Thyroid gland (tissue), 4 donors: ENCODE measurements at regions of chr7 and their contacts with region 1.

Region 1: GRCh38 chr7:148962823-148963582 is 65.3 kb downstream of the PDIA4 start:
- DNase-seq: peak; percentile 66 to 74
- H3K4me3 ChIP-seq: peak overlapping the region in 2 of 3 donors; percentile 26 to 31
- H3K27ac ChIP-seq: peak overlapping the region; percentile 16 to 60 (median 57)
- H3K4me1 ChIP-seq: peaks cover 0 to 4% of the 10 kb centered on the region in 2 donors
- H3K27me3 ChIP-seq: no peaks in the 10 kb centered on the region
- CTCF ChIP-seq: peak; percentile 25 to 97 (median 59)
- POLR2A ChIP-seq: no peak

Region 2: DNA sequence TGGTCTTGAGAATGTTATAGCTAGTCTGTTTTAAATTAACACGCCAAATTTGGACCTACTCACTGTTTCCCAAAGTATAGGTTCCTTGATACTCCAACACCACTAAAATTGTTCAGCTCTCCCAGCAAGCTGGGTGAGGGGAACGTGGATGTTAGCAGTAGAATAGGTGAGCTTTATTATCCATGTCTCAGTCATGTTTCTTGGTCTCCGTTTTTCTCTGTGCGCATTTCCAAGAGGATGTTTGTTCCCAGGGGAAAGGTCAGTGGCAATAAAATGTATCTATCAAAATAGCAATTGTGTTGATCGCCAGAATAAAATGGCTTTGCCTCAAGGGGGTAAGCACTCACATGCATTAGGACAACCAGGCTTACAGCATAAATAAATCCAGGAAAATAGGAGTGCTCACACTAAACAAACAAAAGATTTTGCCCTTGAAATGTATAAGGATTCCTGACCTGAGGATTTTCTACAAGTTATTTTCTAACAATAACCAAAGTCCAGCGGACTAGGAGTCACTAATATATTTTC is 559.5 kb before region 1 on chr7:
- intact Hi-C with region 1: no loop called
- DNase-seq: no peak
- H3K4me3 ChIP-seq: no peak overlapping the region
- H3K27ac ChIP-seq: no peak overlapping the region
- H3K4me1 ChIP-seq: no peaks in the 10 kb centered on the region
- H3K27me3 ChIP-seq: no peaks in the 10 kb centered on the region
- CTCF ChIP-seq: no peak
- POLR2A ChIP-seq: no peak

Region 3: GRCh38 chr7:148503875-148504487 is 459.0 kb before region 1 on chr7:
- intact Hi-C with region 1: loop called (anchors 5 kb)
- DNase-seq: no peak
- H3K4me3 ChIP-seq: no peak overlapping the region
- H3K27ac ChIP-seq: no peak overlapping the region
- H3K4me1 ChIP-seq: no peaks in the 10 kb centered on the region
- H3K27me3 ChIP-seq: no peaks in the 10 kb centered on the region
- CTCF ChIP-seq: peak; percentile 18 to 73 (median 67)
- POLR2A ChIP-seq: no peak

Region 4: GRCh38 chr7:148575640-148576411 is 387.2 kb before region 1 on chr7:
- intact Hi-C with region 1: loop called (anchors 5 kb)
- DNase-seq: peak; percentile 69 to 76
- H3K4me3 ChIP-seq: no peak overlapping the region
- H3K27ac ChIP-seq: no peak overlapping the region
- H3K4me1 ChIP-seq: no peaks in the 10 kb centered on the region
- H3K27me3 ChIP-seq: no peaks in the 10 kb centered on the region
- CTCF ChIP-seq: peak in 5 of 6 experiments; percentile 59 to 83 (median 73)
- POLR2A ChIP-seq: no peak

Region 5: DNA sequence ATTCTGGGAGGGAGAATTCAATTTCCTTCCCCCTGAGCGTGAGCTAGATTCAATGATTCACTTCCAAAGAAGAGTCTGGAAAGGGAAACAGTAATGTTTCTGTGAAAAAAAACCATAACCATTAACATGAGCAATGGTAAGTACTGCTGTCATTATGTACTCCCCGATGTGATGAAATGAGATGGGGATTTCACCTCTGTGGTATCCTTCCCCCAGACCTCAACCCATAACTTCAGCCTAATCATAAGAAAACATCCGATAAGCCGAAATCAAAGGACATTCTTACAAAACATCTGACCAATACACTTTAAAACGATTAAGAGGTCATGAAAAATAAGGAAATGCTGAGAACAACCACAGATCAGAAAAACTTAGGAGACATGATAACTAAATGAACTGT is 106.1 kb before region 1 on chr7:
- intact Hi-C with region 1: loop called (anchors 10 kb)
- DNase-seq: no peak
- H3K4me3 ChIP-seq: no peak overlapping the region
- H3K27ac ChIP-seq: no peak overlapping the region
- H3K4me1 ChIP-seq: no peaks in the 10 kb centered on the region
- H3K27me3 ChIP-seq: no peaks in the 10 kb centered on the region
- CTCF ChIP-seq: no peak
- POLR2A ChIP-seq: no peak

Region 6: DNA sequence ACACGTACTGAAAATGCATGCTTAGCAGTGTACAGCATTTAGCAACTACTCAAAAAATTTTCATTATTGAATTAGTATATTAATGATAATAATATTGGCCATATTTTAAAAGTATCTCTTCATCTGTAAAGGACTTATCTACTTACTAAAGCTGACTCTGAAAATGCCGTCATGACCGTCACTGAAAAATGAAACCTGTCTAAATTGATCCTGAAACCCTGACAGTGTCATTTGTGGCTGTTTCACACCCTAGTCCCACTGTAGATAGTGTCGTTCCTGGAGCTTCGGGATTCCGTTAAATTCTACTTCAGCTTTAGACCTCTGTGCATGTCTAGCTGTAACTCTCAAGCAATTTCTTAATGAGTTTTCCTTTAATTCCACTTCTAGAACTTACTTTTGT is 43.1 kb before region 1 on chr7:
- intact Hi-C with region 1: no loop called
- DNase-seq: no peak
- H3K4me3 ChIP-seq: no peak overlapping the region
- H3K27ac ChIP-seq: no peak overlapping the region
- H3K4me1 ChIP-seq: no peaks in the 10 kb centered on the region
- H3K27me3 ChIP-seq: no peaks in the 10 kb centered on the region
- CTCF ChIP-seq: no peak
- POLR2A ChIP-seq: no peak